ENCODE measurements at regions of chr11 and their contacts with region 1.

Region 1: DNA sequence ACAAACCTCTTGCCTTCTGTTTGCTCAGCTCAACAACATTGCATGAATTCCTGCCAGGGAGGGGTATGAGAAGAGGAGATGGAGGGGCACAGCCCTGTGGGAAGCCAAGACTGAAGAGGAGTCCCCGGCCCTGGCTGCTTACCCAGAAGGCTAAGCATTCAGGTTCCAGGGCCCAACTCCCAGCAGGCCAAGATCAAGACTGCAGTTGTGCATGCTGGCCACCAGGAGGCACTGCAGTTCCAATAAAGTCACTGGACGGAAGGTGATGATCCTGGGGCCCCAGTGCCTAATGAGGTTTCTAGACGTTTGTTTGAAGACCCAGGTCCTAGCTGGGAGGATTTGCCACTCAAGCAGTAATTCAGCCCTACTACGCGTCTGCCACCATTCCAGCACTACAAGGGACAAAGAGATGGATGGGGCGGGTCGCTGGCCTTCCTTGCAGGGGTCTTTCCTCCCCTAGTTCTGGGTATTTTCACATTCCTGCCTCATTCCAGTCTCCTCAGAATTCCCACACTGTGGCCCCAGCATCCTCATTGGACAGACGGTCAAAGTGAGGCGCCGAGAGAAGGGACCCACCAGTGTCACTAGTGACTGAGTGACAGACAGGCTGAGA is 23.6 kb downstream of the ALX4 start:
- DNase-seq: no peak
- ATAC-seq: peak; percentile 49

Region 2: DNA sequence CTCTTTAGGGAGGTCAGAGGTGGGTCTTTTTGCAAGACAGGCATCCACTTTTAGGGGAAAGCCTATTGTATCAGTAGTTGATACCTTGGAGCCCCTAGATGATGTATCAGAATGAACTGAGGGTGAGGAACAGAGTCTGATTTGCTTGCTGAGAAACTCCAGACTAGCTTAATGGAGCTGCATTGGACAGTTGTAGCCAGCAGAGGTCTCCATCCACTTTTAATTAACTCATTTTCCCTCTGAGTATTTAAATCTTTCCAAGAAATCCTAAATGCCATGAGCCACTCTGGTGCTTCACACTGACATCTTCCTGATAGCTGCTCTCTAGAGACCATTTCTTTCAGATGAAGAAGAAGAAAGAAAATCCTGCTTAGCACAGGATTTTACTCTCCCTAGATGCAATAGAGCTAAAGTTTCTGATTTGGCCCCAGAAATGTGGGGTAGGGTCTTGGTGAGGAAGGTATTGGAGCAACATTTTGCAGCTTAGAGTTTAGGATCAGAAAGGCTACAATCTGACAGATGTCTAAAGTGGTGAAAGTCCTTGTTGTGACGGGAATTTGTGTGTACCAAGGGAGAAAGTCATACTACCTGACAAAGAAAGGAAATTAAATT is 152.9 kb before region 1 on chr11:
- intact Hi-C with region 1: loop called (anchors 5 kb)
- DNase-seq: no peak
- ATAC-seq: peak; percentile 67

Region 3: GRCh38 chr11:44305470-44306051 is 19.2 kb after region 1 on chr11:
- intact Hi-C with region 1: no loop called
- DNase-seq: no peak
- ATAC-seq: no peak

Region 4: DNA sequence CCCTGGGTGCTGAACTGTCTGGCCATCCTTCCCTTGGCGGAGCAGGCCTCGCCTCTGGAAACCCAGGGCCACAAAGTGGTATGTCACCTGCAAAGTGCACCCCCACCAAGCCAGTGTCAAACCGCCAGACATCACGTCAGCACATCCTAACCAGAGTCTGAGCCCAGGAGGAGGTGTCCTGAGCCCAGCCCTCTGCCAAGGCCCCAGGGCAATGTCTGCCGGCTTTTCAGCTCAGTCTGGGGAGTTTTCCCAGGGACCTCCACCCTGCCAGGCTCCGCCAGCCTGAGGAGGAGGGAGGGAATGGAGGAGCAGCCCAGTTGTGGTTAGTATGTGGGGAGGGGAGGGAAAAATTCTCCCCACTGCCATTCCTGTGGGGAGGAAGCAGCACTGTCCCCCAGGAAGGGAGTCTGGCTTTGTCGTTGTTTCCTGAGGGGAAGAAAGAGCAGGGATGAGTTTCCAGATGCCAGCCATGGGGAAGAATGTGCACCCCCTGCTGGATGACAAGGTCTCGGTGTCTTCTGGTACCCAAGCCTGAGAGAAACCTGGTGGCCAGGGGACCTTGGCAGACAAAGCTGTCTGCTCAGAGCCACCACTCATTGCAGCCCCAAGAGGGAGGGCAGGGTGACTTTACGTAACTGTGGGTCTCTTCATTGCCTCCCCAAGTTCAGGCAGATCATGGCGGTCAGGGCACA is 197.7 kb after region 1 on chr11:
- intact Hi-C with region 1: loop called (anchors 5 kb)
- DNase-seq: no peak
- ATAC-seq: peak; percentile 13